Mammary epithelial cell (primary cell): ENCODE measurements at regions of chr3 and their contacts with region 1.

Region 1: DNA sequence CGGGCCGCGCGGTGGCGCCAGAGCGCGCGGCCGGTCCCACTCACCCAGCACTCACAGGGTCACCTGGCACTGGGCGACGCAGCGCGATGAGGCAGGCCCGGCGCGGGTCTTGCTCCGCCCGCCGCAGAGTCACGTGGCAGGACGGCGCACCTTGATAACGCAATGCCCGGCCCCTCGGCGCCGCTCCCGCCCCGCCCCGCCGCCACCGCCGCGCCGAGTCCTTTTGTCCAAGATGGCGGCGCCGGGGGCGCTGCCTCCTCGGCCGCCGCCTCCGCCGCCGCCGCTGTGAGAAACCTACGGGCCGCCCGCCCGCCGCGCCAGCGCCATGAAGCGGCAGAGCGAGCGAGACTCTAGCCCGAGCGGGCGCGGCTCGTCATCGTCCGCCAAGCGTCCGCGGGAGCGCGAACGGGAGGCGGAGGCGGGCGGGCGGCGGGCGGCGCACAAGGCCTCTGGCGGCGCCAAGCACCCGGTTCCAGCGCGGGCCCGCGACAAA is at the start of gene RBM15B:
- DNase-seq: peak; percentile 96
- H3K4me3 ChIP-seq: peak within 1 kb of the TSS; percentile 55 to 71 (median 59)
- H3K27ac ChIP-seq: peak within 1 kb of the TSS; percentile 33
- H3K4me1 ChIP-seq: peaks cover 54% of the 10 kb centered on the region
- H3K27me3 ChIP-seq: no peaks in the 10 kb centered on the region
- CTCF ChIP-seq: peak; percentile 62 to 92
- total RNA-seq, gene RBM15B: 33.3 to 40.8 TPM

Region 2: GRCh38 chr3:50600841-50601591 is 790.1 kb before region 1 on chr3:
- CTCF ChIA-PET with region 1: no interaction called
- dilution Hi-C with region 1: loop called (anchors 5 kb)
- in situ Hi-C with region 1: no loop called
- intact Hi-C with region 1: no loop called
- DNase-seq: peak; percentile 91
- H3K4me3 ChIP-seq: peak overlapping the region in 1 of 3 experiments; percentile 9
- H3K27ac ChIP-seq: peak overlapping the region; percentile 42
- H3K4me1 ChIP-seq: peaks cover 31% of the 10 kb centered on the region
- H3K27me3 ChIP-seq: no peaks in the 10 kb centered on the region
- CTCF ChIP-seq: no peak

Region 3: GRCh38 chr3:51434746-51435327 is 43.7 kb after region 1 on chr3:
- CTCF ChIA-PET with region 1: interaction called, 13 read pairs
- dilution Hi-C with region 1: loop called (anchors 5 kb)
- in situ Hi-C with region 1: no loop called
- intact Hi-C with region 1: loop called (anchors 1 kb)
- DNase-seq: peak; percentile 43
- H3K4me3 ChIP-seq: no peak overlapping the region
- H3K27ac ChIP-seq: no peak overlapping the region
- H3K4me1 ChIP-seq: peaks cover 7% of the 10 kb centered on the region
- H3K27me3 ChIP-seq: no peaks in the 10 kb centered on the region
- CTCF ChIP-seq: peak; percentile 85 to 94

Region 4: DNA sequence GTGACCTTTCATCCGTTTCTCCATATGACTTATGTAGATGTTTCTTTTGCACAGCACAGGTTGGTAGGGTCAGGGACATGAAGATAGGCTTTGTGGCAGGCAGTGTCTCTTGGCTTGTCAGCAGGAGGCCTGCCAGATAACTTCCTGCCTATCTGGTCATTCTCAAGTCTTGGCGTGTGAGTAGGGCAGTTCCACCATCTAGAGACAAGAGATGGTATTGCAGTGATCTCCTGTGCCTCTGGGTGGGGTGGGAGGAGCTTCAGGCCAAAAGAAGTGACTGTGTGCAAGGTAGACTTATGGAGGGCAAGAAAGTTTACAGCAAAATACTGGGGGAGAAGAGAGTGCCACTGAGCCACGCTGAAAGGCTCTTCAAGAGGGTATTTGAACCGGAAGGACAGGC is 291.0 kb after region 1 on chr3:
- CTCF ChIA-PET with region 1: interaction called, 3 read pairs
- dilution Hi-C with region 1: no loop called
- in situ Hi-C with region 1: no loop called
- intact Hi-C with region 1: loop called (anchors 1 kb)
- DNase-seq: peak; percentile 84
- H3K4me3 ChIP-seq: no peak overlapping the region
- H3K27ac ChIP-seq: peak overlapping the region; percentile 4
- H3K4me1 ChIP-seq: peaks cover 64% of the 10 kb centered on the region
- H3K27me3 ChIP-seq: no peaks in the 10 kb centered on the region
- CTCF ChIP-seq: peak; percentile 92 to 98

Region 5: DNA sequence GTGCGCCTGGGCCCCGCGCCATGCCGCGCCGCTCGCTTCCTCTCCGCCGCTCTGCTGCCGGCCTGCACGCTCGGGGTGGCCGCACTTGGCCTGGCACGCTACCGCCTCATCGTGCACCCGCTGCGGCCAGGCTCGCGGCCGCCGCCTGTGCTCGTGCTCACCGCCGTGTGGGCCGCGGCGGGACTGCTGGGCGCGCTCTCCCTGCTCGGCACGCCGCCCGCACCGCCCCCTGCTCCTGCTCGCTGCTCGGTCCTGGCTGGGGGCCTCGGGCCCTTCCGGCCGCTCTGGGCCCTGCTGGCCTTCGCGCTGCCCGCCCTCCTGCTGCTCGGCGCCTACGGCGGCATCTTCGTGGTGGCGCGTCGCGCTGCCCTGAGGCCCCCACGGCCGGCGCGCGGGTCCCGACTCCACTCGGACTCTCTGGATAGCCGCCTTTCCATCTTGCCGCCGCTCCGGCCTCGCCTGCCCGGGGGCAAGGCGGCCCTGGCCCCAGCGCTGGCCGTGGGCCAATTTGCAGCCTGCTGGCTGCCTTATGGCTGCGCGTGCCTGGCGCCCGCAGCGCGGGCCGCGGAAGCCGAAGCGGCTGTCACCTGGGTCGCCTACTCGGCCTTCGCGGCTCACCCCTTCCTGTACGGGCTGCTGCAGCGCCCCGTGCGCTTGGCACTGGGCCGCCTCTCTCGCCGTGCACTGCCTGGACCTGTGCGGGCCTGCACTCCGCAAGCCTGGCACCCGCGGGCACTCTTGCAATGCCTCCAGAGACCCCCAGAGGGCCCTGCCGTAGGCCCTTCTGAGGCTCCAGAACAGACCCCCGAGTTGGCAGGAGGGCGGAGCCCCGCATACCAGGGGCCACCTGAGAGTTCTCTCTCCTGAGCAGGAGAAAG is 565.0 kb after region 1 on chr3:
- CTCF ChIA-PET with region 1: no interaction called
- dilution Hi-C with region 1: no loop called
- in situ Hi-C with region 1: no loop called
- intact Hi-C with region 1: no loop called
- DNase-seq: peak; percentile 64
- H3K4me3 ChIP-seq: peak overlapping the region in 1 of 3 experiments; percentile 19
- H3K27ac ChIP-seq: no peak overlapping the region
- H3K4me1 ChIP-seq: peaks cover 15% of the 10 kb centered on the region
- H3K27me3 ChIP-seq: no peaks in the 10 kb centered on the region
- CTCF ChIP-seq: peak; percentile 46 to 72